Tibial artery (tissue), 4 donors: ENCODE measurements at regions of chr12 and their contacts with region 1.

Region 1: DNA sequence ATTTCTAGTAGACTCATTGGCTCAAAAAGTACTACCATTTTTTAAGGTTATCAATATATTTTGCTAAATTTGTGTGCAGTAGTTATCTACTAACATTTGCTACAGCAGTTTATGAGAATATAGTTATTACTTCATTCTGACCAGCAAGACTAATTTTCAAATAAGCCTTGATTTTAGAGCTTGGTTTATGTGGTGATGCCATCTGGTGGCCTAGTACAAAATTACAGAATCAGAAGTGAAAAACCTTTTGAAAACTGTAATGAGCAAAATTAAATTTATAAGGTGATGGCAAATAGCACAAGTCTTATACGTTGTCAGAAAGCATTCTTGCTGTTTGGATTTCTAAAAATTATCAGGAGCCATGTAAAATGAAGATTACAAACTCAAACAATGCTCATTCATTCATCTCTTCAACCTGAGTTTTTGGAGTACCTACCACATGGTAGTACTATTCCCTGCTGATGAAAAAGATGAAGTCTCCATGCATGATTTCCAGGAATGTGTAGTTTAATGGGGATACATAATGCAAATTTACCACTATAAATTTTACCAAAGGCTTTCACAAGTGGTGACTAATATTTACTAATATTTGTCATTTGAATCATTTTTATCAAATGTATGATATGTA is 51.0 kb downstream of the MAGOHB start:
- DNase-seq: no peak
- H3K4me3 ChIP-seq: no peak overlapping the region
- H3K27ac ChIP-seq: no peak overlapping the region
- H3K4me1 ChIP-seq: no peaks in the 10 kb centered on the region
- H3K27me3 ChIP-seq: peaks cover 0 to 4% of the 10 kb centered on the region in 2 donors
- CTCF ChIP-seq: peak; percentile 61 to 80

Region 2: GRCh38 chr12:10235761-10236631 is 326.4 kb before region 1 on chr12:
- intact Hi-C with region 1: loop called (anchors 5 kb)
- DNase-seq: no peak
- H3K4me3 ChIP-seq: no peak overlapping the region
- H3K27ac ChIP-seq: no peak overlapping the region
- H3K4me1 ChIP-seq: no peaks in the 10 kb centered on the region
- H3K27me3 ChIP-seq: no peaks in the 10 kb centered on the region
- CTCF ChIP-seq: peak; percentile 86 to 87

Region 3: DNA sequence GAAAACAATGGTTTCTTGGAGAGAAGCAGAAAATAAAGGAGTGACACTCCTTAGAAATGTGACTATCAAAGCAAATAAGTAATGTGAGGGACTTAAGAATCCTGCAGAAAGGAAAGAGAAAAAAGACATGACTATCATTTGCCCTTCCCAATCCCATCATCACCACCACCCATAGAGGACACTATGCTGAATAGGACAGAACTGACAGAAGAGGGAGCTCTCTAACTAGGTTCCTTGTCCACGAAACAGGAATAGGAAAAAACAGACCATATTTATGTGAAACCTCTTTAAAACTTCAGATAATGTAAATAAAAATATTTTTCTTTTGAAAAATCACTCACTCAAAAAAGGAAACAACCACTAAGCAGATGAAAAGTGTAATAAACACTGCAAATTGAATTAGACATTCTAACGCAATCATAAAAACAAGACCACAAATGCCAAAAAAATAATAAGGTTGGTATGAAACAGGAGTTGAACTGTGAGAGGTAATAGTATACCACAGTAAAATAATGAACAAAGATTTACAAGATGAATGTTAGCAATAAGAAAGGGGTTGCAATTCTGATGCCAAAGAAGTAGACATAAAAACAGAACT is 230.7 kb before region 1 on chr12:
- intact Hi-C with region 1: loop called (anchors 1 kb)
- DNase-seq: no peak
- H3K4me3 ChIP-seq: no peak overlapping the region
- H3K27ac ChIP-seq: no peak overlapping the region
- H3K4me1 ChIP-seq: no peaks in the 10 kb centered on the region
- H3K27me3 ChIP-seq: no peaks in the 10 kb centered on the region
- CTCF ChIP-seq: peak; percentile 54 to 60

Region 4: GRCh38 chr12:10528174-10528953 is 34.1 kb before region 1 on chr12:
- intact Hi-C with region 1: no loop called
- DNase-seq: no peak
- H3K4me3 ChIP-seq: no peak overlapping the region
- H3K27ac ChIP-seq: no peak overlapping the region
- H3K4me1 ChIP-seq: no peaks in the 10 kb centered on the region
- H3K27me3 ChIP-seq: no peaks in the 10 kb centered on the region
- CTCF ChIP-seq: no peak